ENCODE measurements at regions of chr5 and their contacts with region 1.

Region 1: DNA sequence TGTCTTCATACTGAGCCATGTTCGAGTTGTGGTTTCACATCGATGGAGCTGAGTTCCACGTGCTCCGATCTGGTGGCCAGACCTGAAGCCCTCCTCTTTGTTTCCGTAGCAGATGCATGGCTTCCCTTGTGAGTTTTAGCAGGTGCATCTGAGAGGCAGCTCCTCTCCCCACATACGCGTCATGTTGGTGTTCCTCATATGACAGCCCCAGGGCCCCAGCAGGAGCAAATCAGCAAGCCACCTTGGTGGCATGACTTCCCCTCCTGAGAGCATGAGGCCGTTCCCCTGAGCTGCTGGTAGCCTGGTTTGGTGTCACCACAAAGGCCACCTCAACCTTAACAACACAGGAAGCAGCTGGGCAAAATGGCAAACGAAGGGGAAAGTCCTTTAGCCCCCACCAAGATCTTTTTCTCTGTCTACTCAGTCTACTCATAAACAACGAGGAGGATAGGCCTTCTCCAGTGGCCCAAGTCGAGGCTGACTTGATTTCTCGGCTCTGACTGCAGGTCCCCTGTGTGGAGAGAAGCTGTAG is 5.9 kb downstream of the CYFIP2 start:
- DNase-seq: peak; percentile 85
- H3K4me3 Mint-ChIP-seq: peak overlapping the region; percentile 74
- H3K27ac Mint-ChIP-seq: peak overlapping the region; percentile 100
- H3K4me1 Mint-ChIP-seq: peaks cover 96% of the 10 kb centered on the region
- H3K27me3 Mint-ChIP-seq: no peaks in the 10 kb centered on the region

Region 2: GRCh38 chr5:157142317-157143126 is 129.3 kb before region 1 on chr5 and contains the start of gene MED7:
- intact Hi-C with region 1: loop called (anchors 2 kb)
- DNase-seq: peak; percentile 95
- H3K4me3 Mint-ChIP-seq: peak within 1 kb of the TSS; percentile 95
- H3K27ac Mint-ChIP-seq: peak within 1 kb of the TSS; percentile 99
- H3K4me1 Mint-ChIP-seq: peaks cover 42% of the 10 kb centered on the region
- H3K27me3 Mint-ChIP-seq: no peaks in the 10 kb centered on the region
- total RNA-seq, gene MED7: 15.0 and 15.5 TPM in 2 replicates

Region 3: GRCh38 chr5:157283434-157283833 is 11.6 kb after region 1 on chr5:
- intact Hi-C with region 1: loop called (anchors 1 kb)
- DNase-seq: no peak
- H3K4me3 Mint-ChIP-seq: no peak overlapping the region
- H3K27ac Mint-ChIP-seq: peak overlapping the region; percentile 49
- H3K4me1 Mint-ChIP-seq: peaks cover 83% of the 10 kb centered on the region
- H3K27me3 Mint-ChIP-seq: no peaks in the 10 kb centered on the region

Region 4: DNA sequence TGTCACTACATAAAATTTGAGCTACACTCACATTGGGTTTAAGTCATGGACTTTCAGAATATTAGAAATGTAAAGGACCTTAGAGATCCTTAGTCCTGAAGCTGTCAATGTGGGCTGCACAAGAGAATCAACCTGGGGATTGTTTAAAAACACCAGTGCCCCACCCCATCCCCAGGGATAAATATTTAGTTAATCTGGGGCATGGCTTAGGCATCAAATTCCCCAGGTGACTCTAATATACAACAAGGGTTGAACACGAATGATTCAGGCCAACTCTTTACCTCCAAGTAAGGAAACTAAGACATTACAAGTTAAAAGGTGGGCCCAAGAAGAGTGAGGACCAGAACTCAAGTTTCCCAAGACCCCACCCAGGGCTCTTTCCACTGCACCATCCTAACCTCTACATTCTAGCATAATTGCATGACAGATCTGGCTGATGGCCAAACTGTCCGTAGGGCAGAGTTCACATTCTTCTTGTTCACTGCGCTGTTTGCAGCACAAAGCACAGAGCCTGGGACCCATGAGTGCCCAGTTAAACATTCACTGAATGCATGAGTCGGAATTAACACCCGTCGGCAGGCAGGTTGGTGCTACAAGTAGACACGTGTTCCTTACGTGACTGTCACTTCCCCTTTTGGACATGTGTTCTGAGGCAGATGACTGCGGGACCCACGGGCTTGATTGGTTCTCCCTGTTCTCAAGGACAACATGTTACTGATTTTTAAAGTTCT is 19.3 kb after region 1 on chr5:
- intact Hi-C with region 1: loop called (anchors 2 kb)
- DNase-seq: no peak
- H3K4me3 Mint-ChIP-seq: no peak overlapping the region
- H3K27ac Mint-ChIP-seq: peak overlapping the region; percentile 84
- H3K4me1 Mint-ChIP-seq: peaks cover 65% of the 10 kb centered on the region
- H3K27me3 Mint-ChIP-seq: no peaks in the 10 kb centered on the region

Measured in activated T-helper 1 cell treated with anti-CD3 and anti-CD28 coated beads, Interleukin-12 subunit alpha, Interleukin-12 subunit beta, Interleukin-2, Interleukin-4 antibody, amounts not matched to agents 30 ng/mL and 10 ng/mL and 1 ng/mL, durations not matched to agents 14 hours and 24 hours and 36 hours (primary cell).